ENCODE measurements at regions of chr11 and their contacts with region 1.

Region 1: DNA sequence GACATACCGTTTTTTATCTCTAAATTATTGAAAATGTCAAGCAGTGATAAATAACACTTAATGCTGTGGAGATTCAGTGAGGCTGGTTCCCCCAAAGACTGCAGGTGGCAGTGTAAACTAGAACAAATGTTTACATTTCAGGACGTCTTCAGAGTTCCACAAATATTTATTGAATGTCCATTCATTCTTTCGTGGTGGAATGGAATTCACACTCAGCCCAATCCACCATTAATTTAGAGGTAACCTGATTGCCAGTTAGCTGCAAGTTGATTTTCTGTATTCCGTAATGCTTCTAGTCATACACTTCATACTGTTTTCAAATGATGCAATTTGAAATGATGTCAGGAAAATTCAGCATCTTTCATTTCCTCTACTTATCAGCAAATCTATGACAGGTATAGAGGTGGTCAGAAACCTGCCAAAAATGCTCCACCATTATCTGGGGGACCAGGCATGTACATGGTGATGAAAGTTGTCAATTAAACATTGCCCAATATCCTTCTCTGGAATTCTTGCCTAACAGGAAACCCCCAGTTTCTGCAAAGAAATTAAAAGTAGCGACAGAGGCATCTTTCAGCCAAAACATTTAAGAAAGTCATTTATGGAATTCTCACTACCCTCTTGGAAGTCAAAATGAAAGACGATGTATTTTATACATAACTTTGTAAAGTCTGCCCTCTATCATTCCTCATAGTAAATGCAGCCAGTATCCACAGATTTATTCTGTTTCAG is 94.3 kb upstream of the BMAL1 start:
- DNase-seq: peak; percentile 44
- H3K4me3 ChIP-seq: peak overlapping the region; percentile 24
- H3K27ac ChIP-seq: no peak overlapping the region
- H3K4me1 ChIP-seq: no peaks in the 10 kb centered on the region
- H3K27me3 ChIP-seq: no peaks in the 10 kb centered on the region
- CTCF ChIP-seq: peak; percentile 53

Region 2: GRCh38 chr11:12963792-12964536 is 219.3 kb before region 1 on chr11:
- CTCF ChIA-PET with region 1: interaction called, 4 read pairs
- POLR2A ChIA-PET with region 1: no interaction called
- intact Hi-C with region 1: loop called (anchors 1 kb)
- DNase-seq: peak; percentile 78
- H3K4me3 ChIP-seq: no peak overlapping the region
- H3K27ac ChIP-seq: no peak overlapping the region
- H3K4me1 ChIP-seq: no peaks in the 10 kb centered on the region
- H3K27me3 ChIP-seq: no peaks in the 10 kb centered on the region
- CTCF ChIP-seq: peak; percentile 85

Region 3: GRCh38 chr11:13238879-13239514 is 55.7 kb after region 1 on chr11:
- CTCF ChIA-PET with region 1: no interaction called
- POLR2A ChIA-PET with region 1: no interaction called
- intact Hi-C with region 1: loop called (anchors 5 kb)
- DNase-seq: peak; percentile 73
- H3K4me3 ChIP-seq: no peak overlapping the region
- H3K27ac ChIP-seq: no peak overlapping the region
- H3K4me1 ChIP-seq: no peaks in the 10 kb centered on the region
- H3K27me3 ChIP-seq: peaks cover 3% of the 10 kb centered on the region
- CTCF ChIP-seq: peak; percentile 85

Region 4: DNA sequence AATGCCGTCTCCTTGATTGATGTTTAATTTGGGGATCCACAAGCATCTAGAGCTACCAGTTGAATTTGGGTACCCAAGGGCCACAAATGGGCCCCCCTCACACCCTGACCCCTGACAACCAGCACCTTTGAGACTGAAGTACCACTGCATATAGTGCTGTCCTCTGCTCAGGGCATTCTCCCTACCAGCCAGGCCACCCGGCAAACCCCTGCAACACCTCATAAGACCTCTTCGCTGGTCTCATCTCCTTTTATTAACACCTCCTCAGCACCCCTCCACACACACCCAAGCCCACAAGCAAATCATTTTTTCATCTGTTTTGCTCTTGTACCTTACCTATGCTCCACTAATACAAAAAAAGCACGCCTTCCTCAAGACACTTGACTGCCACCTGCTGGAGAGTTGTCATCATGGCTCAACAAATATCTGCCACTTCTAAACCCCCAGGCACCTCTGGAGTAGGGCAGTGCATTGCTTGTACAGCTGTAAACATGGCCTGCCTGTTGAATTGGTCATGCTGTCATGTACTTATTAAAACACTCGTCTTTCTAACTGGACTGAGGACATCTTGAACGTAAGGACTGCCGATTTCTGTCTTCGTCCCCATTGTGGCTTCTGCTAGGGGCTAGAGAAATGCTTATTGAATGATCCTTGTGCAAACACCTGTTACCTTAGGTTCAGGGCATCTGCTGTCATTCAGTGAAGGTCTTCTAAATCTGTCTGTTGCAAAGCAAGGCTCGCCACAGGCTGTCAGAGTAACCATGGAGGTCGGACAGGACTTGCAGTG is 160.9 kb after region 1 on chr11:
- CTCF ChIA-PET with region 1: no interaction called
- POLR2A ChIA-PET with region 1: no interaction called
- intact Hi-C with region 1: loop called (anchors 5 kb)
- DNase-seq: peak; percentile 79
- H3K4me3 ChIP-seq: no peak overlapping the region
- H3K27ac ChIP-seq: no peak overlapping the region
- H3K4me1 ChIP-seq: no peaks in the 10 kb centered on the region
- H3K27me3 ChIP-seq: no peaks in the 10 kb centered on the region
- CTCF ChIP-seq: peak; percentile 81

Region 5: DNA sequence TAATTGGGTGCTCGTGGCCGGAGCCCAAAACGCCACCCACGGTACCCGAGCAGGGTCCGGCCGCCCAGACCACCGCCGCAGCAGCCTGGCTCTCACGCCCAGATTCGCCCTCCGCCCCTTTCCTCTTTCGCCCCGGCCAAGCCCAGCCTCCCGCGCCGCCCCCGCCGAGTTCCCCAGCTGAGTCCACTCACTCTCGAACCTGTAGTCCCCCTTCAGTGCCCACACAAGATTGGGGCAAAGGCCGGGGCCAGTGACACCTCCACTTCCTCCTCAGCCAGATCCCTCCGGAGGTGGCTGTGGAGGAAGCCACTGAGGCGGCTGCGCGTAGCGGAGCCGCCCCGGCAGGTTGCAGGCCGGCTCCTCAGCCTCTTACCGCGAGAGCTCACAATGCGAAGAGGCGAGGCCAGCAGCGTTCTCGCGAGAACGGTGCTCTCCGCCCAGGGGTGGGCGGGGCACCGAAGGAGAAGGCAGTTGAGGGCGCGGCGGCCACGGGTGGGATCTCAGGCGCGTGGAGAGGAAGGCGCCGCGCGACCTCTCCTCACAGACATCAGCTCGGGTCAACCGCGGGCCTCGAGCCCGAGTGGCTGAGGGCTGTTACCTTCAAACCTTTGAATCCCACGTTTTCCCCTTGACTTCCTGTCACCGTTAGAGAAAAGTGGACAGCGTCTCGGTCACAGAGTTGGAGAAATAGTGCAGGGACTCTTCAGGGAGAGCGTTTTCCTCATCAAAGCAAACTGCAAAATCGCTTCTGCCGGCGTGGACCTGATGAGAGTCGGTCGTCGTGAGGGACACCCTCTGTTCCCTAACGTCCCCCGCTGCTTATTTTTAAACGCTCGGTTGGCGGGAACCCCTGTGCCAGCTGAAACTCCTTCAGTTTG is 279.9 kb after region 1 on chr11 and contains the start of gene BTBD10:
- CTCF ChIA-PET with region 1: no interaction called
- POLR2A ChIA-PET with region 1: no interaction called
- intact Hi-C with region 1: loop called (anchors 2 kb)
- DNase-seq: peak; percentile 96
- H3K4me3 ChIP-seq: peak within 1 kb of the TSS; percentile 97
- H3K27ac ChIP-seq: peak within 1 kb of the TSS; percentile 80
- H3K4me1 ChIP-seq: peaks cover 14% of the 10 kb centered on the region
- H3K27me3 ChIP-seq: no peaks in the 10 kb centered on the region
- CTCF ChIP-seq: no peak
- total RNA-seq, gene BTBD10: 18.0 and 18.4 TPM in 2 replicates